T-cell (primary cell): ENCODE measurements at regions of chr2 and their contacts with region 1.

Region 1: GRCh38 chr2:69902213-69902922 is 8.6 kb downstream of the SNRNP27 start:
- DNase-seq: peak in 12 of 35 experiments; percentile 3 to 36 (median 8)
- ATAC-seq: peak; percentile 48 to 63 (median 59)
- H3K4me3 ChIP-seq: peak overlapping the region; percentile 39 to 82
- H3K4me3 Mint-ChIP-seq: peak overlapping the region; percentile 67 to 91 (median 74)
- H3K27ac ChIP-seq: peak overlapping the region; percentile 72
- H3K27ac Mint-ChIP-seq: peak overlapping the region; percentile 92 to 93
- H3K4me1 ChIP-seq: peaks cover 17 to 20% of the 10 kb centered on the region in 2 experiments
- H3K4me1 Mint-ChIP-seq: peaks cover 48 to 59% (median 54%) of the 10 kb centered on the region in 3 donors
- H3K27me3 ChIP-seq: no peaks in the 10 kb centered on the region
- H3K27me3 Mint-ChIP-seq: no peaks in the 10 kb centered on the region

Region 2: DNA sequence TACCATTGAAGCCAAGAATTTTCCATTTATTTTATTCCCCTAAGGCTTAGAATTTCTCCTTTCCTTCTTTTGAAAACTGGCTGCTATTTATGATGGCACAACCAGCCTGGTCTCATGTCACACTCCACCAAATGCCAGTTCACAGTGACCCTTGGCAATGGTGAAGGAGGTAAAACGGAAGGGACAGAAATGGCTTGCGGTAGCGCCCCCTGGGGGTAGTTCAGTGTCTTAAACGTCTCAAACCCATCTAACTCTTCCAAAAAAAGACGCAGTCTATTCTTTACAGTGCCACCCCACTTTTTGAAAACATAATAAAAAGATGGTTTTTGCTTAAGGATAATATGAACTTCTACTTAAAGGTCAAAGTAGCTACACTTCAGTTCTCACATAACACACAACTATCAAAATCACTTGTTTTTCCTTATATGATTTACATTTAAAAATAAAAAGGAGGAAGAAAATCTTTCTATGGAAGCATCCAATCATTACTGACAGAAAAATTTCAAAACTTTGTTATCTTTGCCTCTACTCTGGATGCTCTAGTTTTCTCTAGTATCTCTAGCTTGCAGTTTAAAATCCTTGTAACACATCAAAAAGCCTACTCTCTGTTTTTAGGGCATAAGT is 1716.7 kb before region 1 on chr2:
- CTCF ChIA-PET with region 1: no interaction called
- POLR2A ChIA-PET with region 1: no interaction called
- DNase-seq: peak; percentile 4 to 81 (median 40)
- ATAC-seq: peak in 1 of 4 experiments; percentile 69
- H3K4me3 ChIP-seq: no peak overlapping the region
- H3K4me3 Mint-ChIP-seq: no peak overlapping the region
- H3K27ac ChIP-seq: no peak overlapping the region
- H3K27ac Mint-ChIP-seq: peak overlapping the region in 1 of 2 donors; percentile 44
- H3K4me1 ChIP-seq: peaks cover 2 to 5% of the 10 kb centered on the region in 2 experiments
- H3K4me1 Mint-ChIP-seq: peaks cover 37 to 48% (median 48%) of the 10 kb centered on the region in 3 donors
- H3K27me3 ChIP-seq: no peaks in the 10 kb centered on the region
- H3K27me3 Mint-ChIP-seq: no peaks in the 10 kb centered on the region

Region 3: DNA sequence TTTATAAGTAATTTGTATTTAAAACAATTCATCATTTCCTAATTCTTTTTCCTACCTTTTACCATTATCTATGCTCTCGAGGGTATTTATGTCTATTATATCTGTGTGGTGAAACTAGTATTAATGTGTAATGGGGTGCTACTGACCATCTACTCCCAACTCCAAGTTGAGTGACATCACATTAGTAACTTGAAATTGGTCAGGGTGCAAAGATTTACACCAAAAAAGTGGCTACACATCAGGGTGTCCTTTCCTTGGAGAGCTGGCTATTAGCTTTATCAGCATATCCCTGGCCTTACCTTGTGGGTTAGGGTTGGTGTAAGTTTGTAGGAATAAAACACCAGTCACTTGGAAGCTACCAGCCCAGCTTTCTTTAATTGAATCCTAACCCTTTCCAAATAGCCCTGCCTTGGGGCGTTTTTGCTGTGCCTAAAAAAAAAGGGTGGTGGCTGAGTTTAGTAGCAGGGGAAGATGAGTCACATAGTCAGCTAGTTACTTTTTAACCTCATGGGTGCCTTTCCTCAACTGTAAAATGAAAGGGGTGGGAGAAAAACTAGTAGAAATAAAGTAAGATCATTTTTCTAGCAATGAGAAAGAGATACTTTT is 146.4 kb before region 1 on chr2:
- CTCF ChIA-PET with region 1: no interaction called
- POLR2A ChIA-PET with region 1: interaction called in 1 of 2 experiments, 11 read pairs
- DNase-seq: no peak
- ATAC-seq: no peak
- H3K4me3 ChIP-seq: no peak overlapping the region
- H3K4me3 Mint-ChIP-seq: no peak overlapping the region
- H3K27ac ChIP-seq: no peak overlapping the region
- H3K27ac Mint-ChIP-seq: no peak overlapping the region
- H3K4me1 ChIP-seq: no peaks in the 10 kb centered on the region
- H3K4me1 Mint-ChIP-seq: peaks cover 7 to 18% (median 10%) of the 10 kb centered on the region in 3 donors
- H3K27me3 ChIP-seq: no peaks in the 10 kb centered on the region
- H3K27me3 Mint-ChIP-seq: no peaks in the 10 kb centered on the region

Region 4: DNA sequence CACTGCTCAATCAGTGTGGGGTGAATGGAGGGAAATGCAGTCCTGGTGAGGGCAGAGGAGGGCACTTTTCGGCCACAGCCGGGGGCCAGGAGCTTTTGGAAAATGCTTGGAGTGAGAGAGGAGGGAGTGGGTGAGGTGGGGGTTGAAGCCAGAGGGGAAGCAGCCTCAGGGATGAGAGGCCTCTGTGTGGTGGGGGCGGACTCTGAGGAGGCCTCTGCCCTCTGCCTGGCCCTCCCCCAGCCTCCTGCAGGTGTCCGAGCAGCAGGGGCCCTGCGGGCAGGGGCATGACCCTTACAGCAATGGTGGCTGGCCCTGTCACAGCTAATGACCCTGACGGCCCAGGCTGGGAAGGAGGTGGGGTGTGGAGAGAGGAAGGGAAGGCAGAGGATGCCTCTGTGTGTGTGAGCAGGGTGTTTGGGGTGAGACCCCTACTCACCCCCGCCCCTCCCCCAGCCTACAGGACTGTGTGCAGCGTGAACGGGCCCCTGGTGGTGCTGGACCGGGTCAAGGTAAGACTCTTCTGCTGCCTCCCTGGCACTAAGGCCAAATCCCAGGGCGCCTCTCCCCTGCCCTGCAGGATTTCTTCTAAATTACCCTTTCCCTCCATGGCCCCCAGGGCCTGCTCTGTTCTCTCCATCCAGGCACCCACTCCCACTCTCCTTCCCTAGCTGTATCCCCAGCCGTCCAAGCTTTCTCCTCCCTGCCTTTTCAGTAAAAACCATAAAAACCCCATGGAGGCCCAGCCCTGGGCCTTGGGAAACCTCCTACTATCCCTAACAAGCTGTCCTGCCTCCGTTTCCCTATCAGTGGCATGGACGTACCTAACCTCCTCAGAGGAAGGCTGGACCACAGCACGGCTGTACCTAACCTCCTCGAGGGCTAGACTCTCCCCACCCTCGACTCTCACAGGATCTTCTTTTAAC is 1041.1 kb after region 1 on chr2:
- CTCF ChIA-PET with region 1: interaction called in 1 of 2 experiments, 12 read pairs
- POLR2A ChIA-PET with region 1: no interaction called
- DNase-seq: peak in 1 of 35 experiments; percentile 22
- ATAC-seq: no peak
- H3K4me3 ChIP-seq: no peak overlapping the region
- H3K4me3 Mint-ChIP-seq: no peak overlapping the region
- H3K27ac ChIP-seq: no peak overlapping the region
- H3K27ac Mint-ChIP-seq: no peak overlapping the region
- H3K4me1 ChIP-seq: peaks cover 0 to 19% of the 10 kb centered on the region in 2 experiments
- H3K4me1 Mint-ChIP-seq: peaks cover 9 to 16% (median 15%) of the 10 kb centered on the region in 3 donors
- H3K27me3 ChIP-seq: peaks cover 0 to 33% of the 10 kb centered on the region in 2 experiments
- H3K27me3 Mint-ChIP-seq: peaks cover 24 to 31% of the 10 kb centered on the region in 2 donors